CD8-positive, alpha-beta T cell (primary cell): ENCODE measurements at regions of chr18 and their contacts with region 1.

Region 1: DNA sequence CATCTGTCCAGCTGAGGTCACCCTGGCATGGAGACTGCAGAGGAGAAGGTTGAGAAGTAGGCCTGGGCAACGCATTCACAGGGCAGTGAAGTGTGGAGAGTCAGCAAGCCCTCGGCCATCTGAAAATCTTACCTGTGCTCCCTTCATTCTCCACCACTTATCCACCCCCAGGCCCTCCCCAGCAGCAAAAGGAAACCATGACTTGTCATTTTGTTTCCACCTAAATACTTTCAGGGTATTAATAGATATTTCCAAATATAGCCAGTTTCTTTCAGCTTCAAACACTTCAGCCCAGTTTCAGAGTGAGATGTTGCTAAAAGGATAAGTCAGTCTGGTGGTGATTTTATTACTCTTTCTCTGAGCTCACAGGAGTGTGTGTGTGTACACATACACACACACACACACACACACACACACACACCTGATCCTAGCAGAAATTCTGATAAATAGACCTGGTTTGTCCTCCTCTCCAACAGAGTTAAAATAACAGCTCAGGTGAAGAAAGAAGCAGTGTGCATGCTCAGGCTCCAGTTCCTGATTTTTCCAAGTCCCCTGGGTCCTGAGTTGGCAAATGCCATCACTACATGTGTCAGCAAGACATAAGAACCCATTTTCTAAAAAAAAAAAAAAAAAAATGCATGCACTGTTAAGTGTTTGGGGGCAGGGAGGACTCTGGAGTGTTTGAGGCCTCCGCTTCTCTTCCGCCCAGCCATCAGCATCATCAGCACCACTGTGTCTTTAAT is 82.8 kb downstream of the LOXHD1 start:
- DNase-seq: no peak
- ATAC-seq: no peak
- H3K4me3 ChIP-seq: no peak overlapping the region
- H3K4me3 Mint-ChIP-seq: no peak overlapping the region
- H3K27ac ChIP-seq: no peak overlapping the region
- H3K27ac Mint-ChIP-seq: no peak overlapping the region
- H3K4me1 ChIP-seq: no peaks in the 10 kb centered on the region
- H3K4me1 Mint-ChIP-seq: no peaks in the 10 kb centered on the region
- H3K27me3 ChIP-seq: no peaks in the 10 kb centered on the region
- H3K27me3 Mint-ChIP-seq: peaks cover 4% of the 10 kb centered on the region
- CTCF ChIP-seq: no peak

Region 2: DNA sequence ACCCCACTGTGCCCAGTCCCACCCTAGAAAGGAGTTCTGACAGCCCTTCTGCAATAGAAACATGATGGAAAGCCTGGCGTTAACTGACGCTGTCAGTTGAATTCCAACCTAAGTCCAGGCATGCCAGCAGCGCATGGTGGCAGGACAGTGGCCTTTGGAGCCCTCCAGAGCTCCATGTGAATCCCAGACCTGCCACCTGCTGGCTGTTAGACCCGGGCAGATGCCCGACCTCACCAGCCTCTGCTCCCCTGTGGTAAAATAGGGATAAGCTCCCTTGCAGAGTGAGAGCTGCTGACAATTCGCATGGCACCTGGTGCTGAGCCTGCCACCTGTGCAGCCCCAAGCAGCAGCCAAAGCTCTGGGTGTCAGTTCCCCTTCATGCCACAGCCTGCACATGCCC is 55.7 kb before region 1 on chr18:
- CTCF ChIA-PET with region 1: no interaction called
- POLR2A ChIA-PET with region 1: no interaction called
- intact Hi-C with region 1: loop called in 1 of 2 experiments (anchors 10 kb)
- DNase-seq: no peak
- ATAC-seq: no peak
- H3K4me3 ChIP-seq: no peak overlapping the region
- H3K4me3 Mint-ChIP-seq: no peak overlapping the region
- H3K27ac ChIP-seq: no peak overlapping the region
- H3K27ac Mint-ChIP-seq: no peak overlapping the region
- H3K4me1 ChIP-seq: no peaks in the 10 kb centered on the region
- H3K4me1 Mint-ChIP-seq: no peaks in the 10 kb centered on the region
- H3K27me3 ChIP-seq: no peaks in the 10 kb centered on the region
- H3K27me3 Mint-ChIP-seq: peaks cover 5% of the 10 kb centered on the region
- CTCF ChIP-seq: no peak

Region 3: GRCh38 chr18:46649071-46649862 is 75.1 kb after region 1 on chr18:
- CTCF ChIA-PET with region 1: no interaction called
- POLR2A ChIA-PET with region 1: no interaction called
- intact Hi-C with region 1: no loop called
- DNase-seq: no peak
- ATAC-seq: no peak
- H3K4me3 ChIP-seq: no peak overlapping the region
- H3K4me3 Mint-ChIP-seq: no peak overlapping the region
- H3K27ac ChIP-seq: no peak overlapping the region
- H3K27ac Mint-ChIP-seq: no peak overlapping the region
- H3K4me1 ChIP-seq: no peaks in the 10 kb centered on the region
- H3K4me1 Mint-ChIP-seq: no peaks in the 10 kb centered on the region
- H3K27me3 ChIP-seq: no peaks in the 10 kb centered on the region
- H3K27me3 Mint-ChIP-seq: no peaks in the 10 kb centered on the region
- CTCF ChIP-seq: no peak